ENCODE measurements at regions of chr1 and their contacts with region 1.

Region 1: DNA sequence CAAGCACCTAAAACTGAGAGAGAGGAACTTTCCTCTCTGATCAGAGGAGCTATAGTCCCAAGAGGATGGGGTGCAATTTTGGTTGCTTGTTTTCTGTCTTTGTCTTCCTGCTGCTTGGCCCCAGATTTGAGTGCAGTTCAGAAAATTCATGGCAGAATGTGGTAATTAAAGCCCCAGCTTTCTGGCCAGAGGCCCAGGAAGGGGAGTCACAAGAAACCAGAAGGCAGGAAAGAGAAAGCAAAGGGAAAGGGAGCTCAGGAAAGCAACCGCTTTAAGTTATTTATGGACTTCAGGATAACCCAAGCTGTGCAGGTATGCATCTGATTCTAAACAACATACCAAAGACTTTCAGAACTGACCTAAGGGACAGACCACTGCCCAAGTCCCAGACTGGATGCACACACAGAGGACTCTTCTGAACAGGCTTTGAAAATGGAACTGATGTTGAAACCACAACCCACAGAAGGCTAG is 88.8 kb downstream of the ST3GAL3 start:
- DNase-seq: no peak
- ATAC-seq: no peak
- H3K4me3 ChIP-seq: no peak overlapping the region
- H3K27ac ChIP-seq: no peak overlapping the region
- H3K4me1 ChIP-seq: no peaks in the 10 kb centered on the region
- H3K27me3 ChIP-seq: no peaks in the 10 kb centered on the region
- CTCF ChIP-seq: no peak

Region 2: DNA sequence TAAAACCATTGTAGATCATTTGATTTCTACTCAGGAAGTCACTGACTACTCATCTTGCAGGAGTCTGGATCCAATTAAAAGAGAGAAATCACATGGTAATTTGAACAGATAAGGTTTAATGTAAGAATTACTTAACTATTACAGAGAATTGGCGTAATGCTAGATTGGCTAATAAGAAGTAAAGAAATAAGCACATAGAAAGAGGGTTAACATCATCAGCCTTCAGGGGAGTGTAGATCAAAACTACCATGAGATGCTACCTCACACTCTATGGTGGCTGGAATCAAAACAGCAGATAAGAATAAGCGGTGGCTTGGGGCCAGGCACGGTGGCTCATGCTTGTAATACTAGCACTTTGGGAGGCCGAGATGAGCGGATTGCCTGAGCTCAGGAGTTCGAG is 77.1 kb before region 1 on chr1:
- intact Hi-C with region 1: no loop called
- DNase-seq: no peak
- ATAC-seq: no peak
- H3K4me3 ChIP-seq: no peak overlapping the region
- H3K27ac ChIP-seq: no peak overlapping the region
- H3K4me1 ChIP-seq: no peaks in the 10 kb centered on the region
- H3K27me3 ChIP-seq: no peaks in the 10 kb centered on the region
- CTCF ChIP-seq: no peak

Region 3: DNA sequence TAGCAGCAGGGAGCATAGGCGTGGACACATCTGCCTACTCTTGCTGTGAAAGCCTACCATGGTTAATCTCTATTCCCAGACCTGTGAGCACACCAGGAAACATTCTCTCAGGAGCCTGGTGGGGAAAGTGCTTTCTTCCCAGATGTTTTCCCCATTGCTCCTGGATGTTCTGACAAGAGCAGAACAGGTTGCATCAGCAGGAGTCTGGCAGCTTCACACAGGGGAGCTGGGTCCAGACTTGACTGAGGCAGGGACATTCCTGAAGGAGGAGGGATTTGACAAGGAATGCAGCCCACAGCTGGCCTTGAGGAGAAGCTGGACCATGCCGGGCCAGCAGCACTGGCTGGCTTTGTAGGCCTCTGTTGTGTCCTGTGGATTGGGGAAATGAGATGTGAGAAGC is 116.5 kb after region 1 on chr1:
- intact Hi-C with region 1: loop called (anchors 10 kb)
- DNase-seq: no peak
- ATAC-seq: peak; percentile 44
- H3K4me3 ChIP-seq: no peak overlapping the region
- H3K27ac ChIP-seq: no peak overlapping the region
- H3K4me1 ChIP-seq: peaks cover 6% of the 10 kb centered on the region
- H3K27me3 ChIP-seq: no peaks in the 10 kb centered on the region
- CTCF ChIP-seq: no peak

Measured in upper lobe of right lung (tissue), 1 donor.